ENCODE measurements at regions of chr10 and their contacts with region 1.

Region 1: GRCh38 chr10:71209352-71209715 is 3.0 kb upstream of the UNC5B start:
- DNase-seq: no peak
- H3K27ac ChIP-seq: no peak overlapping the region
- CTCF ChIP-seq: peak; percentile 69

Region 2: DNA sequence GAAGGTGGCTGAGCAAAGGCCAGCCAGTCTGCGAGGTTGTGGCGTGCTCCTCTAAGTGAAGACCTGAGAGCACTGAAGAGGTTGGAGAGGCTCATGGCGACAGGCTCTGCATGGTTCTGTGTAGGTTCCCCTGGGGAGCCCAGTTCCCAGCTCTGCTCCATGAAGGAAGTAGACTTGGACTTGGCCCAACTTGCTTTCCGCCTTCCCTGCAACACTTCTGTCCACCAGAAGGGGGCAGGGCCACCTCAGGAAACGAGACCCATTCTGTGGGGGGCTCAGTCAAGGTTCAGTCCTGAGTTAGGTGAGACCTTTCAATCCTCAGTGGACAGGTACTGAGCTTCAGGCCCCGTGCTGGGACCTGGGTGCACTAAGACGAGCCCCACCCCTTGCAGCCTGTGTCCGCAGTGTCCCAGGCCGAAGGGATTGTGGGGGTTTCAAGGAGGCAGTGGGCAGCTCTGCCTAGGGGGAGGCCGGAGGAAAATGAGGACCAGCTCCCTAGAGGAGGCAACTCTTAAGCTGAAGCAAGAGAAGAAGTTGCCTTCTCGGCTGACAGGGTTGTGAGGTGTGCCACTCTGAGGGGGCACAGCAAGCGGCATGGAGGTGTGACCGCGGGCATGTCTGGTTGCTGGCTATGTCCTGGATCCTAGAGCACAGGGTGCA is 305.9 kb before region 1 on chr10:
- CTCF ChIA-PET with region 1: interaction called, 11 read pairs
- POLR2A ChIA-PET with region 1: no interaction called
- DNase-seq: peak; percentile 56
- H3K27ac ChIP-seq: no peak overlapping the region
- CTCF ChIP-seq: peak; percentile 74

Region 3: DNA sequence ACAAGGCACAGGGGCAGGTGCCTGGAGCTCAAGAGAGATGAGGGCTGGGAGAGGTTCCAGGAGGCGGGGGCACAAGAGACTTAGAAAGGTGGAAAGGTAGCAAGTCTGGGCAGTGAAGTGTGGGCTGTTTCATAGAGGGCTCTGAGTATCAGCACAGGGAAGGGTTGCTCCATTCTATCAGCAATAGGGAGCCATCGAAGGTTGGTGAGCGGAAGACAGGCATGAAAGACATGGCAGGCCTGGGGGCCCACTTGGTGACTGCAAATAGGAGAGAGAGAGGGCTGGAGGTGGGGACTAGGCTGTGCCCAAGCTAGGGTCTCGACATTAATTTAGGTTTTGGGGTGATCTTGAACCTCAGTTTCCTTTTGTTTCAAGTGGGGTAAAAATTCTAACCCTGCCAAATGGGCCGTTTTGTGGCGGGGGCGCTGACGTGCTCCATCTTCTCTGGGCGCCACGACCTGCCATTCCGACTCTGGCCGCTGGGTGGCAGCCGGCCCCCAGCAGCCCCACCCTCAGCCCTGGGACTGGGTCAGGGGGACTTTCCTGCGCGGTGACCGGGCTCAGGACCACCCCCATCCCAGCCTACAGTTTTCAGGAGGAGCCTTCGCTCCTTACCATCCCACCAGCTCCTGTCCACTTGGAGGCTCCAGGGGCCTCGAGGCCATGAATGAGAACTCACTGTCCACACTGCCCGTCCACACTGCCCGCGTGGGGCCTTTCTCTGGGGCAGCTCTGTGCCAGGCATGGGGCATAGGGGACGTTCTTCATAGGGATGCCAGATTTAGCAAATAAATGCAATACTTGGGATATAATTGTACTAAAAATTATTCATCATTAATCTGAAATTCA is 283.7 kb before region 1 on chr10:
- CTCF ChIA-PET with region 1: interaction called, 31 read pairs
- POLR2A ChIA-PET with region 1: no interaction called
- DNase-seq: peak; percentile 70
- H3K27ac ChIP-seq: no peak overlapping the region
- CTCF ChIP-seq: peak; percentile 95

Region 4: DNA sequence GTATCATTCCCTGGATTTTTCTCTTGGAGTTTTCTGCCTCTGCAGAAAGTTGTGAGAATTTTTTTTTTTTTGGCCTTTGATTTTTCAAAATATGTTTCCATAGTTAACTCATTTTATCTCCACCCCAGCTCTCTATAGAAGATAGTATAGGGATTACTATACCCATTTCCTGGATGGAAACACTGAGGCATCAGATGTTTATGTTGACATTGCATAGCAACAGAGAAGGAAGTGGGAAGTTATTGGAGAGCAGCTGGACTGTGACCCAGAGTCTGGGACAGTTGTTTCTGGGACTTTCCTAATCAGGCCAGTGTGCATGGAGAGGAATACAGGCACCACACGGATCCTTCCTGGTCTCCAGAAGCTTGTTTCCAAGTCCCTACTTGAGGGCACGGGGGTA is 345.3 kb after region 1 on chr10:
- CTCF ChIA-PET with region 1: no interaction called
- POLR2A ChIA-PET with region 1: no interaction called
- DNase-seq: no peak
- H3K27ac ChIP-seq: no peak overlapping the region
- CTCF ChIP-seq: no peak

Measured in RWPE1 (cell line).